HepG2 (cell line): ENCODE measurements at regions of chr17 and their contacts with region 1.

Region 1: DNA sequence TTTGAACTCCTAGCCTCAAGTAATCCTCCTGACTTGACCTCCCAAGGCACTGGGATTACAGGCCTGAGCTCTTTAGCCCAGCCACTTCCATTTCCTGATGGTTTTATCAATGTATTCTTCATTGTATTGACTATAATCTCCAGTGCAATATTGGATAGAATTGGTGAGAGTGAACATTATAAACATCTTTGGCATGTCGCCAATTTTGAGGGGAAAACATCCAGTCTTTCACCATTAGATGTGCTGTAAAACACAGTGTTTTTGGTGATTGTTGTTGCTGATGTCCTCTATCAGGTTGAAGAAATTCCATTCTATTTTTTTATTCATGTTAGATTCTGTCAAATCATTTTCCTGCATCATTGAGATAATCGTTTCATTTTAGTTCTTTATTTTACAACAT is 951.9 kb downstream of the KCNJ18 start:
- DNase-seq: no peak
- ATAC-seq: no peak
- H3K4me3 ChIP-seq: no peak overlapping the region
- H3K27ac ChIP-seq: no peak overlapping the region
- H3K4me1 ChIP-seq: no peaks in the 10 kb centered on the region
- H3K27me3 ChIP-seq: no peaks in the 10 kb centered on the region
- CTCF ChIP-seq: no peak
- EP300 ChIP-seq: no peak
- POLR2A ChIP-seq: no peak
- RAD21 ChIP-seq: no peak

Region 2: DNA sequence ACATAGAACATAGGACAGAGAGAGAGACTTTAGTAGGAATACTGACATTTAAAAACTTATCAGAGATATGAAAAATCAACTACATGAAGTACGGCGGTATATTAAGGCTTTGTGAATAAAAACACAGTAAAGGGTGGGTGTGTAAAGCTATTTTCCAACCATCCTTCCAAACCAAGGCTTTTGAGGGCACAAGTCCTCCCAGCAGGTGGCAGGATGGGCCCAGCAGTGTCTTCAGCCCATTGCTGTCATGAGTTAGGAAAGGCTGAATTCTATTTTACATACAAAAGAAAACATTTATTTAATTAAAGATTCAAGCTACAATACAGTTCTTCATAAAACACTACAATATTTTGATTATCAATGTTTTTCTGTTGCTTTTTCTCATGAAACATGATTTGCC is 110.5 kb before region 1 on chr17:
- CTCF ChIA-PET with region 1: no interaction called
- POLR2A ChIA-PET with region 1: no interaction called
- in situ Hi-C with region 1: loop called (anchors 25 kb)
- intact Hi-C with region 1: no loop called
- DNase-seq: no peak
- ATAC-seq: no peak
- H3K4me3 ChIP-seq: no peak overlapping the region
- H3K27ac ChIP-seq: no peak overlapping the region
- H3K4me1 ChIP-seq: no peaks in the 10 kb centered on the region
- H3K27me3 ChIP-seq: no peaks in the 10 kb centered on the region
- CTCF ChIP-seq: 0 out of 2 replicates have a peak, but pooled peaks have one; percentile 7
- EP300 ChIP-seq: no peak
- POLR2A ChIP-seq: no peak
- RAD21 ChIP-seq: no peak

Region 3: GRCh38 chr17:22703786-22704441 is 59.6 kb after region 1 on chr17:
- CTCF ChIA-PET with region 1: no interaction called
- POLR2A ChIA-PET with region 1: no interaction called
- in situ Hi-C with region 1: no loop called
- intact Hi-C with region 1: loop called (anchors 10 kb)
- DNase-seq: no peak
- ATAC-seq: peak; percentile 89
- H3K4me3 ChIP-seq: no peak overlapping the region
- H3K27ac ChIP-seq: no peak overlapping the region
- H3K4me1 ChIP-seq: no peaks in the 10 kb centered on the region
- H3K27me3 ChIP-seq: no peaks in the 10 kb centered on the region
- CTCF ChIP-seq: peak; percentile 60
- EP300 ChIP-seq: no peak
- POLR2A ChIP-seq: no peak
- RAD21 ChIP-seq: no peak